IMR-90 (cell line): ENCODE measurements at regions of chr14 and their contacts with region 1.

Region 1: GRCh38 chr14:22822571-22823098 is 7.1 kb upstream of the MRPL52 start:
- DNase-seq: peak; percentile 86
- ATAC-seq: peak; percentile 73
- H3K4me3 ChIP-seq: peak overlapping the region; percentile 12; the same call in 1 of the 2 replicates
- H3K27ac ChIP-seq: peak overlapping the region; percentile 76
- H3K4me1 ChIP-seq: peaks cover 30% of the 10 kb centered on the region
- H3K27me3 ChIP-seq: no peaks in the 10 kb centered on the region
- CTCF ChIP-seq: peak; percentile 94
- POLR2A ChIP-seq: peak; percentile 34; the same call in 1 of the 2 replicates
- RAD21 ChIP-seq: peak; percentile 90

Region 2: DNA sequence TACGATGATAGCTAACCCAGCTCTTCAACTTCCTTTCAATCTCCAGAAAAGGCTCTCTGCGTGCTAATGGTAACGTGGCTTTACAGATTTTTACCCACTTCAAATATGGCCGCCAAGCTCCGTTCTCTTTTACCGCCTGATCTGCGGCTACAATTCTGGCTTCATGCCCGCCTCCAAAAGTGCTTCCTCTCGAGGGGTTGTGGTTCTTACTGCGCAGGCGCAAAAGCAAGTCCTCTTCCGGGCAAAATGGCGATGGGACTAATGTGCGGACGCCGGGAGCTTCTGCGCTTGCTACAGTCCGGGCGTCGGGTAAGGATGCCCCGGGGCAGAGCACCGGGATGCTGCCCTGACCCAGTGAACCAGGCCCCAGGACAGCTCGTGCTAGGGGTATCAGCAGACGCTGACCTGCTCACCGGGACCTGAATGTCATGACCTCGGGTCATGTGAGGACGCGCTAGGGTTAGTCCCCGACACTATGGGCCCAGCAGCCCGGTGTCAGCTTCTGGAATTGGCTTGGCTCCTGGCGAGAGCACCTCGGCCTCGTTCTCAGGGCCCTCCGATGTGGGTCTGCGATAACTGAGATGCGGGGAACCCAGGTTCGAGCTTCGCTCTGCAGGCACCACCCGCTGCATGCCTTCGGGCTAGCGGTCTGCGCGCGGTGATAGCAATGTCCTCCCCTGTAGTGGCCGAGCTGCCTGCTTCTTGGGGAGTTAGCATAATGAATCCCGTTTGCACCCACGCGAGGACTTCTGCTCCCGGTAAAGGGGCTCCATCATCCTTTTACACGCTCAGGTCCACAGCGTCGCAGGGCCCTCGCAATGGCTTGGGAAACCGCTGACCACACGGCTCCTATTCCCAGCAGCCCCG is 55.9 kb before region 1 on chr14 and contains the start of gene OXA1L:
- CTCF ChIA-PET with region 1: no interaction called
- POLR2A ChIA-PET with region 1: no interaction called
- dilution Hi-C with region 1: no loop called
- in situ Hi-C with region 1: no loop called
- intact Hi-C with region 1: loop called (anchors 2 kb)
- DNase-seq: peak; percentile 98
- ATAC-seq: peak; percentile 85
- H3K4me3 ChIP-seq: peak within 1 kb of the TSS; percentile 90
- H3K27ac ChIP-seq: peak within 1 kb of the TSS; percentile 92
- H3K4me1 ChIP-seq: peaks cover 5% of the 10 kb centered on the region
- H3K27me3 ChIP-seq: no peaks in the 10 kb centered on the region
- CTCF ChIP-seq: no peak
- POLR2A ChIP-seq: peak; percentile 72
- RAD21 ChIP-seq: no peak
- total RNA-seq, gene OXA1L: 40.0 and 47.3 TPM in 2 replicates

Region 3: DNA sequence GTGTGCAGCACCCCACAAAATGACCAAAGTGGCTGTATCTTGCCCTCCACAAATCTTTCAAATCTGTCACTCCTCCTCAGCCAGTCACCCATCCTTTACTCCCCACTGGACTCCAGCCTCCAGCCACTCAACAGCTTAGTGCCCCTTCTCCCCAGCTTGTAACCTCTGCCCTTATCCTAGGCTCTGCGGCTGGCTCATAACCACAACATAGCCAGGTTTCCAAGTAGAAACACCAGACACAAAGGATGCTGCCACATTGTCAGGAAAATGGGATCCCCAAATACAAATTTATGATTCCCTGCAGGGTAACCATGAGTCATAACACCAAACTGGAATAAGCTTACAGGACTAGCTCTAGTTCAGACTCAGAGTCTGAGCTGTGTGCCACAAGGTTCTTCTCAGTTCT is 41.0 kb before region 1 on chr14:
- CTCF ChIA-PET with region 1: interaction called, 4 read pairs
- POLR2A ChIA-PET with region 1: no interaction called
- dilution Hi-C with region 1: no loop called
- in situ Hi-C with region 1: no loop called
- intact Hi-C with region 1: loop called (anchors 5 kb)
- DNase-seq: peak; percentile 43
- ATAC-seq: peak; percentile 70
- H3K4me3 ChIP-seq: no peak overlapping the region
- H3K27ac ChIP-seq: no peak overlapping the region
- H3K4me1 ChIP-seq: peaks cover 12% of the 10 kb centered on the region
- H3K27me3 ChIP-seq: no peaks in the 10 kb centered on the region
- CTCF ChIP-seq: no peak
- POLR2A ChIP-seq: no peak
- RAD21 ChIP-seq: no peak

Region 4: GRCh38 chr14:22900081-22900799 is 77.6 kb after region 1 on chr14:
- CTCF ChIA-PET with region 1: interaction called, 4 read pairs
- POLR2A ChIA-PET with region 1: no interaction called
- dilution Hi-C with region 1: no loop called
- in situ Hi-C with region 1: no loop called
- intact Hi-C with region 1: loop called (anchors 2 kb)
- DNase-seq: peak; percentile 78
- ATAC-seq: peak; percentile 81
- H3K4me3 ChIP-seq: no peak overlapping the region
- H3K27ac ChIP-seq: no peak overlapping the region
- H3K4me1 ChIP-seq: peaks cover 17% of the 10 kb centered on the region
- H3K27me3 ChIP-seq: no peaks in the 10 kb centered on the region
- CTCF ChIP-seq: peak; percentile 74
- POLR2A ChIP-seq: no peak
- RAD21 ChIP-seq: peak; percentile 71